ENCODE measurements at regions of chr2 and their contacts with region 1.

Region 1: DNA sequence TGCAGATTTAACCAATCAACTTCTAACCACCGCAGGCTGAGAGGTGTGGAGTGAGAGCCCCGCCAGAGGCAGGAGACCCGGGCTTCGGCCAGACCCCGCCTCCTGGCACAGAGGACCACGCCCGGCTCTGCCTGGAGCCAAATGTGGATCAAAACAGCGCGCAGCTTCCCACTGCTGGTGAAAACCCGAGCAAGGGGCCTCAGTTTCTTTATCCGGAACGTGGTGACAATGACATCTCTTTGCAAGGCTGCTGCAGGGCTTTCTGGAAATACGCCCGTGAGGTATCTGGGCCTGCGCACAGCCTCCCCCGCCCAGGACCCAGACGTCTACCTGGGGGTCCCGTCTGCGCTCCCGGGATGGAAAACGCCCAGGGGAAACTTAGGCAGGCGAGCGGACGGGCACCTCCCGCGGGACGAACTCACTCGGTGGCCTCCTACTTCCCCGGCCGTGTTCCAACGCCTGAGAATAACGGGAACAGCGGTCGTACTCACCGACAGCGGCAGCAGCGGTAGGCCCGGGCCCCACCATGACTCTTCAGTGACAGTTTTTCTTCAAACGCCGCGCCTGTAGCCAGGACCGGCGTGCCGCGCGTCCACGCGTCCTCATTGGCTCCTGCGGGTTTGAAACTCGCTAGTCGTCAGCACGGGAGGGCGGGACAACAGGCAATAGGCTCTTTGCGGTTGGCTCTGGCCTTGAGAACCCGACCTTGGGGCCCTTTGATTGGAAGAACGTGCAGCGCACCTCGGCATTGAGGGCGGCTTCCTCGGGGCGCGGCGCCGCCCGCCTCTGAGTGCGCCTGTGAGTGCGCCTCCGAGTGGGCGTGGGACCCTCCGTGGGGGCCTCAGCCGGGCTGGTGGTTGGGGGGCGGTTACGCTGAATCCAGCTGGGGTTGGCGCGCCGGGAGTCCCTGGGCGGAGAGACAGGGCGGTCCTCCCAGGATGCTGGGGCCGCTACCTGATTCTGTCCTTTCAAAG is at the start of gene CKAP2L:
- DNase-seq: peak; percentile 95 to 98 (median 96)
- ATAC-seq: peak; percentile 100
- H3K4me3 ChIP-seq: peak within 1 kb of the TSS; percentile 42 to 96 (median 70)
- H3K27ac ChIP-seq: peak within 1 kb of the TSS in 5 of 12 donors; percentile 6 to 58 (median 18)
- H3K4me1 ChIP-seq: peaks cover 0 to 23% (median 5%) of the 10 kb centered on the region in 12 donors
- H3K27me3 ChIP-seq: no peaks in the 10 kb centered on the region
- CTCF ChIP-seq: no peak
- POLR2A ChIP-seq: no peak
- total RNA-seq, gene CKAP2L: 0.10 to 4.5 (median 0.33) TPM in 6 of 9 donors, not detected in the others

Region 2: DNA sequence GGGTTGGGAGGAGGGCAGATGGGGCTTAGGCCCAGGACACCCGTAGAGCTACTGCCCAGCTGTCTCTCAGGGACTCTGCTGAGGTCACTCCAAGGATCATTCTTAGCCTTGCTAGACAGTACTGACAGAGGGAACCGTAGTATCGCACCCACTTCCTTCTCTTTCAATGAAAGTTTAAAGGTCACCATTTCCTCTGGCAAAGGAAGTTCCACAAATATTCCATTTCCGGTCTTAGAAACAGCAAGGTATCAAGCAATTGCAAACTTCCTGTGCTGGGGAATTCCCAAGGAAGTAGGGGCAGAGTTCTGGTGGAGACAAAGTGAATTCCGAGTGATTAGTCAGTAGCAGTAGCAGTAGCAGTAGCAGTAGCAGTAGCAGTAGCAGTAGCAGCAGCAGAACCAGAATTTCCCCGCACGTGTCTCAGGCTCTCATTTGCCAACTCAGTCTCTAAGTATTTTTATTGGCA is 47.5 kb after region 1 on chr2:
- intact Hi-C with region 1: loop called in 3 of 10 experiments (anchors 5 to 10 kb)
- DNase-seq: peak in 3 of 5 donors; percentile 32 to 57 (median 46)
- ATAC-seq: peak; percentile 72 to 96 (median 88)
- H3K4me3 ChIP-seq: no peak overlapping the region
- H3K27ac ChIP-seq: peak overlapping the region in 10 of 12 donors; percentile 23 to 67 (median 50)
- H3K4me1 ChIP-seq: peaks cover 0 to 33% (median 25%) of the 10 kb centered on the region in 12 donors
- H3K27me3 ChIP-seq: no peaks in the 10 kb centered on the region
- CTCF ChIP-seq: no peak
- POLR2A ChIP-seq: no peak

Region 3: GRCh38 chr2:112818094-112818902 is 53.9 kb after region 1 on chr2:
- intact Hi-C with region 1: loop called in 3 of 10 experiments (anchors 5 to 10 kb)
- DNase-seq: peak in 2 of 5 donors; percentile 24 to 39
- ATAC-seq: peak in 1 of 4 donors; percentile 41
- H3K4me3 ChIP-seq: no peak overlapping the region
- H3K27ac ChIP-seq: no peak overlapping the region
- H3K4me1 ChIP-seq: peaks cover 0 to 11% (median 4%) of the 10 kb centered on the region in 12 donors
- H3K27me3 ChIP-seq: no peaks in the 10 kb centered on the region
- CTCF ChIP-seq: no peak
- POLR2A ChIP-seq: no peak

Region 4: DNA sequence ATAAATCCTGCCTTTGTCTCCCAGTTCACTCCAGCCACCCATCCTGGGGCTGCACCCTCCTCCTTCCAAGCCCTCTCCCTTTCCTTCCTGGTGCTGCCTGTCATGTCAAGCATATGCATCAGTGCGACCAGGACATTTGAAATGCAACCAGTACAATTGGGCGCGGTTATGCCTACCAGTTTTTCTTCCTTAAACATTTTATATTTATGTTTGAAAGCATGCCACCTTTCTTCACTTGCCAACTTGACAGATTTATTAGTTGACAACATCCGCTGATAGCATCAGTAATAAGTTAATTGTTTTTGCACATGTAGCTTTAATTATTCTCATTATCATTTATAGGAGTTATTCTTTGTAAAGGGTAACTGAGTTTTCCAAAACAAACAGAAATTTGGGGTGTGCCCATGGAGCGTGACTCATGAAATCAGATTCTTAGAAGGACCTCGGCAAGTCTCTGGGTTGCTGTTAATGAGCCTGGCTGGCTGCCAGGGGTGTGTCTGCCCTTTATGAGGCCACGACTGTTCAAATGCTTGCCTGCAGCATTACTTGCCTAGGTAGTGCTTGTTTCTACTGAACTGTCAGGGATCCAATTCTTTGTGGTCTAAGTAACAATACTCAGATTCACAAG is 105.0 kb after region 1 on chr2:
- intact Hi-C with region 1: loop called in 1 of 10 experiments (anchors 5 kb)
- DNase-seq: peak; percentile 66 to 86 (median 80)
- ATAC-seq: peak; percentile 77 to 94 (median 84)
- H3K4me3 ChIP-seq: no peak overlapping the region
- H3K27ac ChIP-seq: no peak overlapping the region
- H3K4me1 ChIP-seq: peaks cover 0 to 20% (median 1%) of the 10 kb centered on the region in 12 donors
- H3K27me3 ChIP-seq: peaks cover 0 to 14% (median 0%) of the 10 kb centered on the region in 9 donors
- CTCF ChIP-seq: no peak
- POLR2A ChIP-seq: no peak